Right cardiac atrium (tissue), 5 donors: ENCODE measurements at regions of chr11 and their contacts with region 1.

Region 1: DNA sequence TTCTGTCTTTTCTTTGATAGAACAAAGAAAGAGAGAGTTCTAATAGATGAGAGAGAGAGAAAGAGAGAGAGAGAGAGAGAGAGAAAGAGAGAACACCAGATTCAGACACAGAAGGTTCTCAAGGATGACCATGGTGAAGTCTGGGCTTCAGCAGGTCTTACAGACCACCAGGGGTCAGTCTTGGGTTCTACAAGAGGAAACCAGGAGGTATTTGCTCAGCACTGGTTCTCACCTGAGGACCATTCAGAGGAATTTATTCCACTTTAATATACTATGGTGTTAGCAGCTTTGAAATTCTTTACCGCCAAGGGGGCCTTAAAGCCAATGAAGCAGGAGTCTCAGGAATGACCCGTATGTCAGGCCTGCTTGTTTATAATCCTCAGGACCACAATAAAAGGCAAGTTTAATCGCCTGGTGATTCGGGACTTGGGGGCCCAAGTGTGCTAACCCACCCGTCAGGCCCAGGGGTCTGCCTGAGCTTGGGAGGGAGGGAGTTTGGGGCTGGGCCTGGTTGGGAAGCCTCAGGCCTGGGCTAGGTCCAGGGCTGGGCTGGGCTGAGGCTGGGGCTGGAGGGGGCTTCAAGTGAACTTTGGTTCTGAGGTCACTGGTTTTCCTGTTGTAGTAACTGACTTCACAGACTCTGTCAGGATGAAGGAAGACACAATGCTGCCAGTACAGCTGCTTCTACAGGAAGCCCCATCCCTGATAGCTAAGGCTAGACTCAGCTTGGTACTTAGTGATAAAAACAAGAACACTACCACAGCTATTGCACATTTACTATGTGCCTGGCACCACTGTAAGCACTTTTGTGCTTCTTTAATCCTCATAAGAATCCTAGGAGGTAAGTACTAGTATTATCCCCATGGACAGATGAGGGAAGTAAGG is 179.2 kb upstream of the ZBED5 start:
- DNase-seq: peak in 1 of 3 donors; percentile 57
- ATAC-seq: peak; percentile 78 to 84
- H3K4me3 ChIP-seq: no peak overlapping the region
- H3K27ac ChIP-seq: no peak overlapping the region
- H3K4me1 ChIP-seq: no peaks in the 10 kb centered on the region
- H3K27me3 ChIP-seq: no peaks in the 10 kb centered on the region

Region 2: DNA sequence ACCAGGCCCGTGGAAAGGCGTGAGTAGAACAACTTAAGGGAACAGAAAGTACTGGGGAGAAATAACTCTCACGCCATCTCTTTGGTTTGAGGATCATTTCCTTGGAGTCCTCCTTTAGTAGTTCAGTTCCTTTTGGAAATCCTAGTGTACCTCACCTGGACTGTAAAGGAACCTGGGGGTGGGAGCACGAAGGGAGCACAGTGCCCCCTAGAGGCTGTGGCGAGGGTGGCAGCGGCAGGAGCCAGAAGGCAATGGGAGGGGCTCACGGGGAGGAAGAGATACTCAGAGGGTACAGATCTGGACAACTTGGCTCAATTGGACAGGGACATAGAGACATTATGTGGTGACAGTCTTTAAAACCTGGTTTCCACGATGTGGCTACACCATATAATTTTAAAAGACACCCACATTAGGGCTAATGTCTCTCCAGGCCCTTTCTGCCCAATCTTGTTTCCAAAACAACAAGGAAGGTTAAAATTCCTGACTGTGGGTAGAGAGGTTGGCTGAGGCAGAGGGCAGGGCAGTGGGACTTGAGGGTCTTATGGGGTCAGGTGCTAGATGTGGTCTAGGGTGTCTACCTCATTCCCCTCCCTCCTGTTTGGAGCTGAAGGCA is 229.0 kb after region 1 on chr11:
- intact Hi-C with region 1: loop called in 3 of 4 experiments (anchors 5 to 10 kb)
- DNase-seq: peak; percentile 49 to 81 (median 75)
- ATAC-seq: peak; percentile 32 to 61
- H3K4me3 ChIP-seq: no peak overlapping the region
- H3K27ac ChIP-seq: no peak overlapping the region
- H3K4me1 ChIP-seq: no peaks in the 10 kb centered on the region
- H3K27me3 ChIP-seq: no peaks in the 10 kb centered on the region